ENCODE measurements at regions of chr4 and their contacts with region 1.

Region 1: GRCh38 chr4:110770353-110770752 is 147.5 kb upstream of the PITX2 start:
- DNase-seq: no peak
- ATAC-seq: no peak
- H3K4me3 ChIP-seq: no peak overlapping the region
- H3K27ac ChIP-seq: no peak overlapping the region
- H3K4me1 ChIP-seq: no peaks in the 10 kb centered on the region
- H3K27me3 ChIP-seq: no peaks in the 10 kb centered on the region
- CTCF ChIP-seq: no peak
- POLR2A ChIP-seq: no peak
- RAD21 ChIP-seq: no peak

Region 2: DNA sequence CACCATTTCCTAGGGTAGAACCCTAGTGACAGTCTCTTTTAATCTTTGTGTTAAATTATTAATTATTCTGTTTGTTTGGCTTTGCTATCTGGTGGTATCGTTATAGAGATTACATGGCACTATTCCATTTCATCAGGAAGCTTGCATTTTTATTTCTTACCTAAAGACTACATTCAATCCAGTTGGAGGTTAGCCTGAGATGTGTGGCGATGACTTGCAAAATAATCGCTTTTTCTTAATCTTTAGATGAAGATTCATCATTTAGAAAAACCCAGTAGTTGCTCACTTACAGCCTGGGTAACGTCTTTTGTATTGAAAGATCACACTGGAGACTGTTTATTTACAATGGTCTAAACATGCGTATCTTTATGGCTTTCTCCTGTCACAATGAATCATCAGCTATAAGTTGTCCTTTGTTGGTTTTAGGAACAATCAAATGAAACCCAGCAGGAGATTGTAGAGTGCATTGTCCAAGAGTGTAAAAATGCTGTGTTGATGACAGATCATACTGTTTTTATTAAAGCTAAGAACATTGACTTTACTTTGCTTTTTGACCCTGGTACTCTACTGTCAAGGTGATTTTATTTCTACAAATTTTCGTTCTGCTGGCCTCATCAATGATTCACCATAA is 134.2 kb after region 1 on chr4:
- CTCF ChIA-PET with region 1: no interaction called
- POLR2A ChIA-PET with region 1: no interaction called
- dilution Hi-C with region 1: no loop called
- in situ Hi-C with region 1: no loop called
- intact Hi-C with region 1: loop called (anchors 5 kb)
- DNase-seq: peak; percentile 8
- ATAC-seq: no peak
- H3K4me3 ChIP-seq: no peak overlapping the region
- H3K27ac ChIP-seq: no peak overlapping the region
- H3K4me1 ChIP-seq: no peaks in the 10 kb centered on the region
- H3K27me3 ChIP-seq: no peaks in the 10 kb centered on the region
- CTCF ChIP-seq: no peak
- POLR2A ChIP-seq: no peak
- RAD21 ChIP-seq: no peak